ENCODE measurements at regions of chr13 and their contacts with region 1.

Region 1: DNA sequence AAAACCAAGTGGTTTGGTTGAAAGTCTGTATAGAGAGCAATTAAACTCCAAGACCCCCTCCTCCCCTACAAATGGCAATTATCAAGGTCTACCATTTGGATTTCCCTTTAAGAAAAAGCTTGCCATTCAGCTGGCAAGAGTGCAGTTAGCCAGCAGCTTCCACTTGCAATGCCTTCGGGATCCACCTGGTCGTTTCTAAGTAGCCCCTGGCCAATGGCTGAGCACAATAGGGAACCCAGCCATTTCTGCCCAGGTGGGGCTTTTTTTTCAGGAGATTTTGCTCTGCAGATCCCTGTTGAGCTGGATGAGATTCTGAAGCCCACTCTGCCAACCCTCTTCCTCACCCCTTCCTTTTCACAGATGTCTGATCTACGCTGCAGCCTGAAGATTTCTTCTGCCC is 26.3 kb downstream of the TGDS start:
- DNase-seq: no peak
- ATAC-seq: no peak
- H3K4me3 ChIP-seq: no peak overlapping the region
- H3K27ac ChIP-seq: no peak overlapping the region
- H3K4me1 ChIP-seq: no peaks in the 10 kb centered on the region
- H3K27me3 ChIP-seq: no peaks in the 10 kb centered on the region
- CTCF ChIP-seq: no peak
- EP300 ChIP-seq: no peak
- POLR2A ChIP-seq: no peak
- RAD21 ChIP-seq: no peak

Region 2: DNA sequence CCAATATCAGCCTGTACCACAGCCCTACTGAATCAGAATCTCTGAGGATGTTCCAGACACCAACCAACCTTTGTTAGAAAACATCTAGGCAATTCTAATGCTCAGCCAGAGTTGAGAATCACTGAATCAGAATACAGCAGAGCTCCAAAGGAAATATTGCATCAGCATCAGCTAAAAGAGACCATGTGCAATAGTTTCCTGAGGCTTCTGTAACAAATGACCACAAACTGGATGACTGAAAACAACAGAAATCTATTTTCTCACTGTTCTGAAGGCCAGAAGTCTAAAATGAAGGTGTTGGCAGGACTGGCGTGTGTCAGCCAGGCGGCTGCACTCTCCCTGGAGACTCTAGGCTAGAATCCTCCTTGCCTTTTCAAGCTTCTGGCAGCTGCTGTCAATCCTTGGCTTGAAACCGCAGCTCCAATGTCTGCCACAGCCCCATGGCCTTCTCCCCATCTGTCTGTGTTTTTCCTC is 88.9 kb before region 1 on chr13:
- CTCF ChIA-PET with region 1: no interaction called
- POLR2A ChIA-PET with region 1: no interaction called
- RAD21 ChIA-PET with region 1: no interaction called
- SMC1A ChIA-PET with region 1: no interaction called
- in situ Hi-C with region 1: no loop called
- intact Hi-C with region 1: no loop called
- DNase-seq: no peak
- ATAC-seq: no peak
- H3K4me3 ChIP-seq: no peak overlapping the region
- H3K27ac ChIP-seq: no peak overlapping the region
- H3K4me1 ChIP-seq: no peaks in the 10 kb centered on the region
- H3K27me3 ChIP-seq: no peaks in the 10 kb centered on the region
- CTCF ChIP-seq: no peak
- EP300 ChIP-seq: no peak
- POLR2A ChIP-seq: no peak
- RAD21 ChIP-seq: no peak

Region 3: DNA sequence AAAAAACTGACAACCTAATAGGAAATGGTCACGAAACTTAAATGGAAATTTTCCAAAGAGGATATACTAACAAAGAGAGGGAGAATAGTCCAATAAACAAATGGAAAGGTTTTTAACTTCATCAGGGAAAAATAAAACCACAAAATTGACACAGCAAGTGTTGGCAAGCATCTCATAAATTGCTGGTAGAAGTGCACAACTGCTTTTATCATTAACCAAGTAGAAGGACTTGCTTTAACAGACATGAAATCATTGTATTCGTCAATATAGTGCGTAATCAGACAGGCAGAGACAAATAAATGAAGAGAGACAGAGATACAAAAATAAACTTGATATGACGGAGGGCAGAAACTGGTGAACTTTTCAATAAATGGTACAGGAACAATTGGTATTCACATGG is 18.9 kb after region 1 on chr13:
- CTCF ChIA-PET with region 1: no interaction called
- POLR2A ChIA-PET with region 1: interaction called, 12 read pairs
- RAD21 ChIA-PET with region 1: no interaction called
- SMC1A ChIA-PET with region 1: no interaction called
- in situ Hi-C with region 1: no loop called
- intact Hi-C with region 1: no loop called
- DNase-seq: no peak
- ATAC-seq: no peak
- H3K4me3 ChIP-seq: no peak overlapping the region
- H3K27ac ChIP-seq: no peak overlapping the region
- H3K4me1 ChIP-seq: no peaks in the 10 kb centered on the region
- H3K27me3 ChIP-seq: no peaks in the 10 kb centered on the region
- CTCF ChIP-seq: no peak
- EP300 ChIP-seq: no peak
- POLR2A ChIP-seq: no peak
- RAD21 ChIP-seq: no peak

Measured in GM12878 (cell line).